Sigmoid colon (tissue), 7 donors: ENCODE measurements at regions of chr4 and their contacts with region 1.

Region 1: DNA sequence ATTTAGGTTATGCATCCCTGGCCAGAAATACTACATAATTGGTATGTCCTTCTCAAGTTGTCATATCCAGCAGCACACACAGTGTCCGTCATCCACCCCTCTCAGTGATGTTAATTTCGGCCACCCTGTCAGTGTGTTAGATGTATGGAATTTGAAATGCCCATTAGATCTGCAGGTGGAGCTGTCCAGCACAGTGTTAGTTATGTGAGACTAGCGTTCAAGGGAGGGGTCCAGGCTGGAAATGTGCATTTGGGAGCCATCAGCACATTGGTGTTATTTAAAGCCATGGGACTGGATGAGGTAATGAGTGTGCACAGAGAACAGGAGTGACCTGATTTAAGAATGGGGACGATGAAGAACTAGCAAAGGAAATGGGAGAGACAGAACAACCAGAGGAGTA is 22.4 kb downstream of the ANAPC4 start:
- DNase-seq: no peak
- H3K4me3 ChIP-seq: no peak overlapping the region
- H3K27ac ChIP-seq: no peak overlapping the region
- H3K4me1 ChIP-seq: no peaks in the 10 kb centered on the region
- H3K27me3 ChIP-seq: no peaks in the 10 kb centered on the region
- CTCF ChIP-seq: no peak
- EP300 ChIP-seq: no peak
- POLR2A ChIP-seq: no peak

Region 2: DNA sequence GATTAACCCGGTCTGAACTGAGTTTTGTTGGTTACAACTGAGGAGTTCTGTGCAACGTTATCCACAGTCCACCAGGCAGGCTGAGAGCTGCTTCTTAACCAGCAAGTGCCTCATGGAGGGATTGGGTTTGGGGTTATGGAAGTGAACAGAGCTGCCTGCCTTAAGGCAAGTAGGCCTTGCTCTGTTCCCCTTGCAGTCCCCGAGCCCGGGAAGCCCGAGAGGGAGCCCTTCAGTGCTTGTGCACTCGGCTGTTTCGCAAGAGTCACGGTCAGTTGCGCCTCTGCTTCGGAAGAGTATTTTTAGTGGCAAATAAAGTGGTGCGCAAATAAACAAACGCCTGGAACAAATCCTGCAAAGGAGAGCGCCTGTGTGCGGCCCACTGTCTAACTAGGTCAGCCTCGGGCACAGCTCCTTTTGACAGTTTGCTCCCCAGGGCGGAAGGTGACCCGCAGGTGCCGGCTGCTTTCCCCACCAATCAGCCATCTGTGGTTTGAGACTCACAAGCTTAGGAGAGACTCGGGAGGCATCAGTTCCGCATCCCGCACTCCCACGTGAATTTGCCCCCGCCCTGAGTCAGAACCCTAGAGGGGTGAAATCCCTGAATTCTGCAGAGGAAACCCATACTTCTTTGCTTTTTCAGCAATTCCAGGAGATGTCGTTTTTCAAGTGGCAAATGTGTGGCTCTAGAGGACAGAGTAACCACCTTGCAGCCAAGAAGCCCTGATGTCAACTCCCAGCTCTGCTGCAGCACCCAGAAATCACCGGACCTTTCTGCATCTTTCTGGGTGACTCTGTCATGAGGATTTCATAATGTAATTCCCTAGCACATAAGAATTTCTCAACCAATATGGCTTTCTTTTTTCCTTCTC is 425.5 kb before region 1 on chr4:
- intact Hi-C with region 1: no loop called
- DNase-seq: peak; percentile 79
- H3K4me3 ChIP-seq: no peak overlapping the region
- H3K27ac ChIP-seq: peak overlapping the region in 2 of 4 donors; percentile 42 to 53
- H3K4me1 ChIP-seq: peaks cover 0 to 8% (median 0%) of the 10 kb centered on the region in 4 donors
- H3K27me3 ChIP-seq: no peaks in the 10 kb centered on the region
- CTCF ChIP-seq: no peak
- EP300 ChIP-seq: no peak
- POLR2A ChIP-seq: no peak

Region 3: DNA sequence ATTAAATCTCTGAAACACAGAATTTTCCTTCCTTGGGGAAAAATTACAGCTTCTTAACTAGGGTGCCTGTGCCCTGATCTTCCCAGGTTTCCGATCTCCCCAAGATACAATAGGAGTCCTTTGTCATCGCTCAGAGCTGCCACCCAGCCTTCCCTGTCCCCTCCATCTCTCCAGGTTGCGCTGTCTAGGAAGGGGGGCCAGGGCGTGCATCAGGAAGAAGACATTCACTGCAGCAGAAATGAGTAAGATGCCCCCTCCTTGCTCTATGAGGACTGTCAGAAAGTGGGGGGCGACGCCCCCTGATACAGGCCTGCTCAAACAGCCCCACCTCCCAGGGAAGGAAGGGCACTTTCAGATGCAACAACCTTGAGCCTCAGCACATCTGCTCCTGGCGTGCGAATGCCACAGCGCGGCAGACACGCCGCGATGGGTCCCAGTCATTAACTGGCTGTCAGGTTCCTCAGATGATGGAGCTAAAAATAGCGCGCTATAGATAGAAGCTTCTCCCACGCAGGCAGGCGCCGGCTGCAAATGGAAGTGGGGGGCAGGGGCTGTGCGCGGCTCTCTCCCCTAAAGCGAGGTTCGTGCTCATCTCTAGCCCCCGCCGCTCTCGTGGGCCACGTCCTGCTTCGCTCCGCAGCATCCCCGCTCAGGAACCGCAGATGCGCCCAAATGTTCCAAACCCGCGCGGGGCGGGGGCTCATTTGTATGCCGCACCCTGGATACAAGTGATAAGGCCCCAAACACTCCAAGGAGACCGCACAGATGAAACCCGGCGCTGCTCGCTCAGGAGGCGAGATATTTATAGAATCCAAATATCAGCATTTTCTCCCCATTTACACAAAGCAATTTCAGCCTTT is 311.2 kb before region 1 on chr4:
- intact Hi-C with region 1: no loop called
- DNase-seq: no peak
- H3K4me3 ChIP-seq: peak overlapping the region; percentile 3 to 41 (median 28)
- H3K27ac ChIP-seq: peak overlapping the region in 1 of 4 donors; percentile 33
- H3K4me1 ChIP-seq: peaks cover 0 to 41% (median 33%) of the 10 kb centered on the region in 4 donors
- H3K27me3 ChIP-seq: no peaks in the 10 kb centered on the region
- CTCF ChIP-seq: no peak
- EP300 ChIP-seq: no peak
- POLR2A ChIP-seq: no peak

Region 4: DNA sequence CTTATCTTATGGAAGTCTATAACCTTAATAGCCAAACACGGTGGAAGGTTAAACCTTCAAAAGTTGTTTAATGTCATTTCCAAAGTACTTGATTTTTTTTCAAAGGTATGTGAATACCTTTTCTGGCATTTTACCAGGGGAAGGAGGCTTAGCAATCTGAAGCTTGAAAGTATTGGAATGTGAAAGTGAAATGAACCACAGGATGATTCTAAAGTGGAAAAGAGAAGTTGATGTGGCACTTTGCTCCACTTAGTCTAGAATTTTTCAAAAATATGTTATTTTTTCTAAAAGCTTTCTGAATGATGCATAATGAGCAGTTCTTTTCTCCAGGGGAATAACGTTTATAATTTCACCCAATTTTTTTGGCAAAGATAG is 146.5 kb before region 1 on chr4:
- intact Hi-C with region 1: no loop called
- DNase-seq: no peak
- H3K4me3 ChIP-seq: no peak overlapping the region
- H3K27ac ChIP-seq: no peak overlapping the region
- H3K4me1 ChIP-seq: no peaks in the 10 kb centered on the region
- H3K27me3 ChIP-seq: no peaks in the 10 kb centered on the region
- CTCF ChIP-seq: no peak
- EP300 ChIP-seq: no peak
- POLR2A ChIP-seq: no peak

Region 5: DNA sequence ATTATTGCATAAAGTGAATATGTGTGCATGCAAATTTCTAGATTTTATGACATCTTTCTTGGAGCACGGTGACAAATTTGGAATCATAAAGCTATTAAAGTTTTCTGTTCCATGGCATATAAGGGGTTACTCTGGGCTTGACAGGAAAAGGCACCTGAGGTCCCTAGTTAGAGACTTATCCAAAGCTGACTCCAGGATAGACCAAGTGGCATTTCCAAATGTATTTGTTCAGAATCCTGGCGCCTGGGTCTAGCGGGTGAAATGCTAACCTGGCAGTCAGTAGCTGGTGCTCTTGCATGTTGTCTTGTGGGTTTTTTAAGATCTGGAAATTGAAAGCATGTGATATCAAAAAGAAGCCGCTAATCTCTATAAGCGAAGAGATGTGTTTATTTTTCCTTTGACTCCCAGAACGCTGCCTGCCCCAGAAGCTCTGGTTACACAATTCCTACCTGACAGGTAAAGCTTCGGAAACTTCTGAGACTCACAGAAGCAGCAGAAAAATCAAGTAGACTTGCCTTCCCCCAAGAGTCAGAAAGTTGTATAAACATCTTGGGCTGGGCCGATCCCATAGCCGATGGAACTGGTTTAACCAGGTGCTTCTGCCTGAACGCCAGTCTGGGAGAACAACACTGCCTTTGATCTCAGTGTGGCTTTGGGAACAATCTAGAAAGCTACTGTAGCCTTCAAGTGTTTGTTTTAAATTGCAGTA is 99.9 kb before region 1 on chr4:
- intact Hi-C with region 1: no loop called
- DNase-seq: no peak
- H3K4me3 ChIP-seq: no peak overlapping the region
- H3K27ac ChIP-seq: no peak overlapping the region
- H3K4me1 ChIP-seq: no peaks in the 10 kb centered on the region
- H3K27me3 ChIP-seq: no peaks in the 10 kb centered on the region
- CTCF ChIP-seq: no peak
- EP300 ChIP-seq: no peak
- POLR2A ChIP-seq: no peak

Region 6: DNA sequence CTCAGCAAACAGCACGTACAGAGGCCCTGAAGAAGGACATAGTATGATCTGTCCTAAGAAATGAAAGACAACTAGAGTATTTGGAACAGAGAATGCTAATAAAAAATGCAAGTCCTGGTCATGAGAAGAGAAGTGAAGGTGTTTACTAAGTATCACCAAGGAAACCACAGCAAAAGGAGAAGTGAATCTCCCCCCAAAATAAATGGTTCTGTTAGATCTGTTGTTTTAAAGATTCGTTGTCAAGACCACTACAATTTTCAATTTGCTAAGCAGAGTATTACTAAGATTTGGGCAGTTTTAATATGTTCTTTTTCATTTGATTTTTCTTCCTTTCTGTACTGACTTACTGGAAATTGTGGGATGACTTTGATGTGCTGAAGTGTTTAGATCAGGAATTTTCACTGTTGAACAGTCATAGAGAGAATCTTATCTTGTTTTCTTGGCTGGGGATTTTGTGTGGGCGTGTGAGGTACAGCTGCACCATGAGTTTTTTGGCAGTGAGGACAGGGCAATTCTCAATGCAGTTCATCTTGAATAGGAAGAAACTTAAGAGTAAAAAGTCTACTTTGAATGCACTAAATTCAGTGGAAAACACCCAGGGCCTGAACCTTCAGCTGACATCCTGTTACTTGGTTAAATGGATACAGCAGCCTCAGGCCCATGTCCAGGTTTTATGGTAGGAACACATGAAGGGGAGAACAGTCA is 1593.3 kb after region 1 on chr4:
- intact Hi-C with region 1: loop called (anchors 5 kb)
- DNase-seq: no peak
- H3K4me3 ChIP-seq: no peak overlapping the region
- H3K27ac ChIP-seq: peak overlapping the region; percentile 11 to 41 (median 28)
- H3K4me1 ChIP-seq: peaks cover 0 to 27% (median 26%) of the 10 kb centered on the region in 4 donors
- H3K27me3 ChIP-seq: no peaks in the 10 kb centered on the region
- CTCF ChIP-seq: no peak
- EP300 ChIP-seq: no peak
- POLR2A ChIP-seq: no peak